Activated B cell treated with CpG ODN at 0.5 μM for 24 hours (primary cell): ENCODE measurements at regions of chr3 and their contacts with region 1.

Region 1: GRCh38 chr3:184777336-184778004 is 34.5 kb upstream of the VPS8 start:
- DNase-seq: peak; percentile 55
- ATAC-seq: peak; percentile 100
- H3K4me3 Mint-ChIP-seq: no peak overlapping the region
- H3K27ac Mint-ChIP-seq: no peak overlapping the region
- H3K4me1 Mint-ChIP-seq: no peaks in the 10 kb centered on the region
- H3K27me3 Mint-ChIP-seq: peaks cover 24% of the 10 kb centered on the region
- CTCF ChIP-seq: no peak

Region 2: DNA sequence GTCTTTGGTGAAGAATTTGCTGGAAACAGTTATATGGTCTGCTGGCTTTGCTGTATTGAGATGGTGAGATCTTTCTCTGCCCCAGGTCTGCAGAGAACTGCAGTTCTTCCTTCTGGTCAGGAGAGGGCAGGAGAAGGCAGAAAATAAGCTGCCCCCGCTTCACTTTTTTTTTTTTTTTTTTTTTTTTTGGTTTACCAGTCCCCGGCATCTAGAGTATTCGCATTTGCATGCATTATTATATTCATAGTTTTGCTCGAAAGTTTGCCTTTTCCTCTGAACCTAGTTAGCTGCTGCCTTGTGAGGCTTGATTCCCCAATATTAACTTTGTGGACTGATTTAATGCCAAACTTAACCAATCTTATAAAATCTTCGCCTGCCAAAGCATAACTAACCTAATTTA is 882.2 kb before region 1 on chr3:
- CTCF ChIA-PET with region 1: no interaction called
- POLR2A ChIA-PET with region 1: no interaction called
- intact Hi-C with region 1: loop called (anchors 10 kb)
- DNase-seq: no peak
- ATAC-seq: peak; percentile 97
- H3K4me3 Mint-ChIP-seq: no peak overlapping the region
- H3K27ac Mint-ChIP-seq: no peak overlapping the region
- H3K4me1 Mint-ChIP-seq: peaks cover 4% of the 10 kb centered on the region
- H3K27me3 Mint-ChIP-seq: peaks cover 22% of the 10 kb centered on the region
- CTCF ChIP-seq: no peak

Region 3: GRCh38 chr3:184417619-184418327 is 359.7 kb before region 1 on chr3:
- CTCF ChIA-PET with region 1: interaction called, 3 read pairs
- POLR2A ChIA-PET with region 1: no interaction called
- intact Hi-C with region 1: loop called (anchors 5 kb)
- DNase-seq: peak; percentile 65
- ATAC-seq: peak; percentile 100
- H3K4me3 Mint-ChIP-seq: no peak overlapping the region
- H3K27ac Mint-ChIP-seq: no peak overlapping the region
- H3K4me1 Mint-ChIP-seq: peaks cover 2% of the 10 kb centered on the region
- H3K27me3 Mint-ChIP-seq: no peaks in the 10 kb centered on the region
- CTCF ChIP-seq: peak; percentile 71

Region 4: DNA sequence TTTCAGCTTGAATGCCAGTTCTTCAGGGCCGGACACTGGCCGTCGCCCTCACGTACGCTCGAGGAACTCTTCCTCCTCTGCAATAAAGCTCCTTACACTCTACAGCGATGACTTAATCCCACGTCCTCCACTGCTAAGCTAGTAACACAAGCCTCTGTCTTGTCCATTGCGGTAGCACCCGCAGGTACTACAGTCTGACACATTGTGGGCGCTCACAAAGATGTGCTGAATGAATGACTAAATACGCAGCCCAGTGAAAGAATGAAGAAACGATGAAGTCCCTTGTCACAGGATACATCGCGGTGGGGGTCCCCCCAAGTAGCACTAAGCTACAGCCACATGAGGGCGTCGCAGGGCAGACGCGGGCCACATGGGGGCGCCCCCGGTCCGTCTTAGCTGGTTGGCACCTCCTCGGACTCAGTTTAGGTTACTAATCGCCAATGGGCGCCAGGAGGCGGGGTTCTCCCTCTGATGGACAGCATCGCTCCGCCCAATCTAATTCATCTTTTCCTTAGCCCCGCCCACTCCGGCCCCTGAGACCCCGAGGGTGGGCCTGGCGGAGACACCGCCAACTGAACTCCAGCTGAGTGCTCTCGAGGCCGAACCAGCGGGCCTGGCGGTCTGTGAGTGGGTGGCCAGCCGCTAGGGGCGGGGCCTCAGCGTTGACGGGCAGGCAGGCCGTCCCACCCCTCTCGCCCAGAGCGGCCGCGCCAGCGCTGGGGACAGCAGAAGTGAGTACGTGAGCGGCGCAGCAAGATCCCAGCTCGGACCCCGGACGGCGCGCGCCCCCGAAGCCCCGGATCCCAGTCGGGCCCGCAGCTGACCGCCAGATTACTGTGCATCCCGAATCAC is 216.2 kb before region 1 on chr3 and contains the start of gene EPHB3:
- CTCF ChIA-PET with region 1: interaction called, 8 read pairs
- POLR2A ChIA-PET with region 1: interaction called, 12 read pairs
- intact Hi-C with region 1: loop called (anchors 1 kb)
- DNase-seq: peak; percentile 89
- ATAC-seq: peak; percentile 93
- H3K4me3 Mint-ChIP-seq: peak within 1 kb of the TSS; percentile 77
- H3K27ac Mint-ChIP-seq: no peak within 1 kb of the TSS
- H3K4me1 Mint-ChIP-seq: peaks cover 15% of the 10 kb centered on the region
- H3K27me3 Mint-ChIP-seq: peaks cover 40% of the 10 kb centered on the region
- CTCF ChIP-seq: peak; percentile 67
- total RNA-seq, gene EPHB3: 0.05 and 0.07 TPM in 2 replicates

Region 5: DNA sequence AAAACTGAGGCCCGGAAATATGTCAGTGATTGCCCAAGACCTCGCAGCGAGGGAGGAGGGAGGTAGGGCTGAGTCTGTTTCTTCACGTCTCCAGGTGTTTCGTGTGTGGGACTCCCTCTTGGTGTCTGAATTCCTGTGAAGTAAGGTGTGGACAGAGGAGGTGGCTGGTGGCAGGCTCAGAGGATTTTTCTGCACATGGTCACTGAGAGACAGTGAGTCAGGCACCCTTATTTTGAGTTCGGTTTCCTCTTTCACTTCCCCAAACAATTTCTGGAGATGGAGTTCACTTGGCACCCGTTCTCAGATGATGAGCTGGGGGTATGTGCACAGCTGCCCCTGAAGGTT is 11.8 kb before region 1 on chr3:
- CTCF ChIA-PET with region 1: interaction called, 11 read pairs
- POLR2A ChIA-PET with region 1: interaction called, 3 read pairs
- intact Hi-C with region 1: no loop called
- DNase-seq: no peak
- ATAC-seq: peak; percentile 89
- H3K4me3 Mint-ChIP-seq: peak overlapping the region; percentile 8
- H3K27ac Mint-ChIP-seq: peak overlapping the region; percentile 35
- H3K4me1 Mint-ChIP-seq: peaks cover 26% of the 10 kb centered on the region
- H3K27me3 Mint-ChIP-seq: peaks cover 1% of the 10 kb centered on the region
- CTCF ChIP-seq: no peak